ENCODE measurements at regions of chr20 and their contacts with region 1.

Region 1: DNA sequence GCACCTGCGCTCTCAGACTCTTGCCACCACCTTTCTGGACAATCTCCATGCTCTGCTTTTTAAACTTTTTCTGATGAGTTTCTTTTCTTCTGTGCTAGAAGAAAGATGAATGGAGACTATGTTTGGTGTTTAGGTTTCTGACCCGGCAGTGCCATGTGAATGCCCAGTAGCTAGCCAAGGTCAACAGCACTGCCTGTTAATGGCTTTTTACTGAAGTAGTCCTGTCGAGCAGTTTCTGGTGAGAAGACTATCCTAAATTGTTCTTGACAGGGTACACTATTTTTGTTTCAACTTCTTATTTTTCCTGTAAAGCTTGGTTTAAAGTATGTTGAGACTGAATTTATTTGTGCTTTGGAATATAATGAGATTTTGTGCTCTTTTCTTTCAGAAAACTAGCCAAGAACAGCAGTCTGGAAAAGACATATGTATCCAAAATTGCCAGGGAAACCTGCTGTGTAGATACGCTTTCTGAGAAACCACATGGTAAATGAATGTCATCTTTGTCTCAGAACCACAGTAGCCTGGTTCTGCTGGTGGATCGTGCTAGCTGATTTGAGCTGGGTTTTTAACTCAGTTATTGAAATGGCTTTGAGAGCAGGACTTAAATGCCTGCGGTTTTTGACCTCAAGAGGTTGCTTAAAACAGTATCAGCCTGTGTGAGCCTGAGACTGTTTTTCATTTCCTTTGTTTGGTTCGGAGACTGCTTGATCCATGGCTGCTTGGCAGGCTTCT is 48.1 kb downstream of the KCNS1 start:
- DNase-seq: peak; percentile 15 to 34 (median 21)
- H3K4me3 ChIP-seq: no peak overlapping the region
- H3K4me3 Mint-ChIP-seq: peak overlapping the region in 7 of 8 donors; percentile 6 to 63 (median 31)
- H3K27ac ChIP-seq: peak overlapping the region; percentile 5
- H3K27ac Mint-ChIP-seq: peak overlapping the region; percentile 24 to 84 (median 68)
- H3K4me1 ChIP-seq: peaks cover 86% of the 10 kb centered on the region
- H3K4me1 Mint-ChIP-seq: peaks cover 62 to 89% (median 78%) of the 10 kb centered on the region in 4 donors
- H3K27me3 ChIP-seq: no peaks in the 10 kb centered on the region
- H3K27me3 Mint-ChIP-seq: no peaks in the 10 kb centered on the region

Region 2: DNA sequence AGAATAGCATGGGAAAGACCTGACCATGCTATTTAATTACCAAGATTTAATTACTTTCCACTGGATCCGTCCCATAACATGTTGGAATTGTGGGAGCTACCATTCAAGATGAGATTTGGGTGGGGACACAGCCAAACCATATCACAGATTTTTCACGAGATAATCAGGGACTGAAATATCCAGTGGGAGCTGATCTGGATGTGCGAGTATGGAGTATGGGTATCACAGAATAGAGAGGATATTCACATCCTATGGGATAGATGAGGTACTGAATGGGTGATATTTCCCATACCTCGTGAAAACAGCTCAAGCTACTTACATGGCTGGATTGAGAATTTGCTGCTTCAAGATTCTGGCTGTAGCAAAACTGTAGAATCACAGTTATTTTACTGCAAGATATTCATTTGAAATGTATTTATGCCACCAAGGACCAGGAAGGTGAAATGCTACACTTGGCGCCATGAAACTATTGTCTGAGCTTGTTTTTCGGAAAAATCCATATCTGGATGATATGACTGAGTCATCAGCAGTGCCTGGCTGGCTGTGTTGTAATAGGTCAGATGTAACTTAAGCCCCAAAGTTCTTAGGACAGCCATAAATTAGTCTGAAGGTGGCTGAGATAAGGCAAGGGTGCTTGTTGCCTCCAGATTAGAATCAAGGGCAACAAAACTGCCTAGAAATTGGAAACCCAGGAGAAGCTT is 18.2 kb after region 1 on chr20:
- CTCF ChIA-PET with region 1: interaction called, 5 read pairs
- POLR2A ChIA-PET with region 1: interaction called, 3 read pairs
- intact Hi-C with region 1: loop called (anchors 2 kb)
- DNase-seq: no peak
- H3K4me3 ChIP-seq: no peak overlapping the region
- H3K4me3 Mint-ChIP-seq: no peak overlapping the region
- H3K27ac ChIP-seq: no peak overlapping the region
- H3K27ac Mint-ChIP-seq: peak overlapping the region in 6 of 7 donors; percentile 32 to 75 (median 58)
- H3K4me1 ChIP-seq: peaks cover 35% of the 10 kb centered on the region
- H3K4me1 Mint-ChIP-seq: peaks cover 37 to 73% (median 54%) of the 10 kb centered on the region in 4 donors
- H3K27me3 ChIP-seq: no peaks in the 10 kb centered on the region
- H3K27me3 Mint-ChIP-seq: no peaks in the 10 kb centered on the region